ENCODE measurements at regions of chr9 and their contacts with region 1.

Region 1: DNA sequence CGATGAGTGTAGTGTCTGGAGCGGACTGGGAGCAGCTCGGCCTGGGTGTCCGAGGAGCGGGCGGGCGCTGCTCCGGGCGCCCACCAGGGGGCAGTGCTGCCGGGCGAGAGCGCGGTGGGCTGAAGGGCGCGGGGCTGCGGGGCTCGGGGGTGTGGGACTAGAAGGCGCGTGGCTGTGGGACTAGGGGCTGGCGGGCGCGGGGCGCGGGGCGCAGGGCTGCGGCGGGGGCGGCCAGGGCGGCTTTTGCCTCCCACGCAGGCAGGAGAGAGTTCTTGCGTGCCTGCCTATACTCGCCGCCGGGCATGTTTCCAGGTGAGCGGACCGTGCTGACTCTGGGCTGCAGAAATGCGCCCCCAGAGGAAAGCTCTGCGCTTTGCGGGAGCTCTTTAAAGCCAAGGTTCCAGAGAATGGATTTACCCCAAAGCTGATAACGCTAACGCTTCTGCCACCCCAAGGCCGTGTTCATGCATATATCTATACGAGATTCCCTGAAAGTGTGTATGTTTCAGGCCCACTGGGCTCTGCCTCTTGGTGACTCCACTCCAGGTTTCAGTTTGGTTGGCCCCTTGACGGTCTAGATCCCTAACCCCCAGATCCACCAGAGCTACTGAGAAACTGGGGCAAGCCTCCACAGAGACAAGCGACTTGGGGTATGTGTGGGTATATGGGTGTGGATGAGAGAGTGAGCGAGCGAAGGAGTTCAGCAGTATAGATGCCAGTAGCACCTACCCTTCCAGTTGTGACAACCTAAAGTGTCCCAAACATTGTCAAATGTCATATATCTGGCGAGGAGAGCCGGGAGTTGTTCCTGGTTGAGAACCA is 56.2 kb downstream of the ACER2 start:
- DNase-seq: peak; percentile 76
- ATAC-seq: peak; percentile 95
- H3K4me3 Mint-ChIP-seq: peak overlapping the region; percentile 84
- H3K27ac Mint-ChIP-seq: no peak overlapping the region
- H3K4me1 Mint-ChIP-seq: peaks cover 15% of the 10 kb centered on the region
- H3K27me3 Mint-ChIP-seq: no peaks in the 10 kb centered on the region

Region 2: GRCh38 chr9:19184144-19184917 is 280.6 kb before region 1 on chr9:
- CTCF ChIA-PET with region 1: interaction called, 17 read pairs
- POLR2A ChIA-PET with region 1: no interaction called
- DNase-seq: peak; percentile 90
- ATAC-seq: peak; percentile 100
- H3K4me3 Mint-ChIP-seq: peak overlapping the region; percentile 60
- H3K27ac Mint-ChIP-seq: peak overlapping the region; percentile 94
- H3K4me1 Mint-ChIP-seq: peaks cover 27% of the 10 kb centered on the region
- H3K27me3 Mint-ChIP-seq: no peaks in the 10 kb centered on the region

Region 3: DNA sequence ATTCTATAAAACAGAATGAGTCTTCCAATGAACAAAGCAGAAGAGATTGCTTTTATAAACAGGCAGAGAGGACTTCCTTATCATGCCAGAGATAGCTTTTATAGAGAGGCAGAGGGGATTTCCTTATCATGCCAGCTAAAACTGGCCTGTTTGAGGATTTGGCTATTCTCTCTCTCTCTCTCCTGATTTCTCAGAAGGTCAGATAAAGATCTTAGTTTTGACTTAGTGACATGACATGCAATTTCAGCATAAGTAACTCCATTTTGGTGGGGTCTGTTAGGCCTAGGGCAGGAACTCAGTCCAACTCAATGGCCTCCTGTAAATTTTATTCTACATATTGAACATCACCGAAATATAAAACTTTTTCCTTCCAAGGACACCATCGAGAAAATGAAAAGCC is 266.0 kb before region 1 on chr9:
- CTCF ChIA-PET with region 1: interaction called, 10 read pairs
- POLR2A ChIA-PET with region 1: no interaction called
- DNase-seq: no peak
- ATAC-seq: no peak
- H3K4me3 Mint-ChIP-seq: no peak overlapping the region
- H3K27ac Mint-ChIP-seq: no peak overlapping the region
- H3K4me1 Mint-ChIP-seq: peaks cover 14% of the 10 kb centered on the region
- H3K27me3 Mint-ChIP-seq: no peaks in the 10 kb centered on the region

Region 4: DNA sequence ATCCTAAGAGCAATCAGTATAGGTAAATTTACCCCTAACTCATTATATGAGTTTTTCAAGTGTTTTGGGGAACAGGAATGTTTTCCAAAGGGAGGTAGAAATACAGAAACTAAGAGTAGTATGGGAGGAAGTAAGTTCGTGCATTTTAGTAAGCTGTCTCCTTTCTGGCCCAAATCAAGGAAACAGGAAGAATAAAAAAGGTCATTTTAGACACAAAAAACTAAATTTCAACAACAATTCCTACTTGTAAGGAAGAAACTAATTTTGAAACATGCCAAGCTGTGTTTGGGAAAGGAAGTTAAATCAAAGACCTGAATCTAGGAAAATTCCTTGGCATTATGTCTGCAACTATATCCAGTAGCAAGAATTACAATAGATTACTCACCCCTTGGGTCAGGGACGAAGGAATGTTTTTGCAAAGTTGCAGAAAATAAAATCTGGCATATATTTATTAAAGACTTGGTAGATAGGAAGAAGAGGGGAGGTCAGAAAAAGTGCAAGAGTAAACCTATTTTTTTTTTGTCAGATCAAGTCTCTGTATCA is 78.4 kb before region 1 on chr9:
- CTCF ChIA-PET with region 1: interaction called, 13 read pairs
- POLR2A ChIA-PET with region 1: no interaction called
- DNase-seq: no peak
- ATAC-seq: no peak
- H3K4me3 Mint-ChIP-seq: no peak overlapping the region
- H3K27ac Mint-ChIP-seq: no peak overlapping the region
- H3K4me1 Mint-ChIP-seq: peaks cover 11% of the 10 kb centered on the region
- H3K27me3 Mint-ChIP-seq: peaks cover 10% of the 10 kb centered on the region

Region 5: DNA sequence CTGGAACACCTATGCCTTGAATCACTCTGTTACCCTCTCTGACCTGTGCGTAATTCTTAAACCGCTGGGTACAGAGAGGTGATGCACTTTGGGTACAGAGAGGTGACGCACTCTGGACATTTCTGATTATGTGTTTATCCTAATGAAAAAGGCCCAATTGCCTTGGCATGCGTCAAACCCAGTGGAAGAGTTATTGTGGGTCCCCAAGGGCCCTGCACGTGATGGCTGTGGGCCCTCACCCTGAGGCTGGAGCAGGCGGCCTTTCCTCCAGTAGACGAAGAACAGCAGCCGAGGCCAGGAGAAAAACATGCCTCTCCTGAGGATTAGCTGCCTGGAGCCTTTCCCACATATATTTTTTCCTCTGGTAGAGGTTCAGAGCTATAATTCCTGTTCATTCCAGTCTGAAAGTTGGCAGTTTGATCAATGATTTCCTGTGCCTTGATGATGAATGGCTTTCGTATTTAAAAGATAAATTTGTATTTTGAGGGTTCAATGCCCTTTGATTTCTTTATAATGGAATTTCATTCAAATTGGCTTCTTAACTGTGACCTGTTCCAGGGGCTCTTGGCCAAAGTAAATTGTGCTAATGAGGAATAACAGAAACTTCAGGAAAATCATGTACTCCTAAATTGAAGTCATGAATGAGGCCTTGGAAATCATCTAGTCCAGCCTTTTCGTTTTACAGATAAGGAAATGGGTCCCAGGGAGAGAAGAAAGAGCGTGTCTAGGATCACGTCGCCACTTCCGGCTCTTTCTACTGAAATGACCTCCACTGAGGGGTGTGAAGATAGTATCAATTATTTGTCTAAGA is 33.4 kb before region 1 on chr9:
- CTCF ChIA-PET with region 1: interaction called, 68 read pairs
- POLR2A ChIA-PET with region 1: no interaction called
- DNase-seq: no peak
- ATAC-seq: no peak
- H3K4me3 Mint-ChIP-seq: no peak overlapping the region
- H3K27ac Mint-ChIP-seq: no peak overlapping the region
- H3K4me1 Mint-ChIP-seq: no peaks in the 10 kb centered on the region
- H3K27me3 Mint-ChIP-seq: no peaks in the 10 kb centered on the region

Region 6: GRCh38 chr9:19441730-19442129 is 23.2 kb before region 1 on chr9:
- CTCF ChIA-PET with region 1: interaction called, 68 read pairs
- POLR2A ChIA-PET with region 1: interaction called, 3 read pairs
- DNase-seq: no peak
- ATAC-seq: peak; percentile 76
- H3K4me3 Mint-ChIP-seq: peak overlapping the region; percentile 47
- H3K27ac Mint-ChIP-seq: peak overlapping the region; percentile 71
- H3K4me1 Mint-ChIP-seq: peaks cover 11% of the 10 kb centered on the region
- H3K27me3 Mint-ChIP-seq: no peaks in the 10 kb centered on the region

Region 7: GRCh38 chr9:19481121-19481870 is 16.3 kb after region 1 on chr9:
- CTCF ChIA-PET with region 1: interaction called, 28 read pairs
- POLR2A ChIA-PET with region 1: no interaction called
- DNase-seq: no peak
- ATAC-seq: no peak
- H3K4me3 Mint-ChIP-seq: no peak overlapping the region
- H3K27ac Mint-ChIP-seq: no peak overlapping the region
- H3K4me1 Mint-ChIP-seq: no peaks in the 10 kb centered on the region
- H3K27me3 Mint-ChIP-seq: peaks cover 23% of the 10 kb centered on the region

Region 8: DNA sequence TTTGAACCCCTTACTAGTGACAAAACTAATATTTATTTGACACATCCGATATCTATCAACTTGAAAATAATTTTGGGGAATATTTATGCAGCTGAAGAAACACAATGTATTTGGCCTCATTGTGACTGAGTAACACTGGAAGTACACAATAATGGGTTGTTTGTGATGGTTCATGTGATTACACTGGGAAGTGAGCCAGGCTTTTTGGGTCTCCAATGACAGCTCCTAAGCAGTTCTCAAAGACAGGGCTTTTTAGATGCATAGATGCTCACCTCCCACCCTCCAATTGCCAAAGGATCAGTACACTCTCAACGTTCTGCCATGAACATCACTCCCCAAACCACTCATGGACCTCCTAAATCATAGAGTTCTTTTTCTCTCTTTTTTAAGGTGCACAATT is 153.8 kb after region 1 on chr9:
- CTCF ChIA-PET with region 1: no interaction called
- POLR2A ChIA-PET with region 1: no interaction called
- DNase-seq: no peak
- ATAC-seq: no peak
- H3K4me3 Mint-ChIP-seq: no peak overlapping the region
- H3K27ac Mint-ChIP-seq: no peak overlapping the region
- H3K4me1 Mint-ChIP-seq: no peaks in the 10 kb centered on the region
- H3K27me3 Mint-ChIP-seq: peaks cover 8% of the 10 kb centered on the region

Region 9: GRCh38 chr9:19641046-19641445 is 176.1 kb after region 1 on chr9:
- CTCF ChIA-PET with region 1: no interaction called
- POLR2A ChIA-PET with region 1: no interaction called
- DNase-seq: no peak
- ATAC-seq: no peak
- H3K4me3 Mint-ChIP-seq: no peak overlapping the region
- H3K27ac Mint-ChIP-seq: no peak overlapping the region
- H3K4me1 Mint-ChIP-seq: no peaks in the 10 kb centered on the region
- H3K27me3 Mint-ChIP-seq: no peaks in the 10 kb centered on the region

Measured in activated CD8-positive, alpha-beta T cell treated with anti-CD3 and anti-CD28 coated beads, Interleukin-2, amount 10 ng/mL, durations not matched to agents 7 days and 5 days (primary cell).